WTC11 (cell line): ENCODE measurements at regions of chr15 and their contacts with region 1.

Region 1: GRCh38 chr15:88331280-88331679 is 74.7 kb upstream of the NTRK3 start:
- DNase-seq: peak; percentile 91
- ATAC-seq: peak; percentile 97
- H3K4me3 Mint-ChIP-seq: no peak overlapping the region
- H3K27ac Mint-ChIP-seq: no peak overlapping the region
- H3K4me1 Mint-ChIP-seq: no peaks in the 10 kb centered on the region
- H3K27me3 Mint-ChIP-seq: no peaks in the 10 kb centered on the region; the same call in 1 of the 2 replicates
- CTCF ChIP-seq: peak; percentile 77

Region 2: DNA sequence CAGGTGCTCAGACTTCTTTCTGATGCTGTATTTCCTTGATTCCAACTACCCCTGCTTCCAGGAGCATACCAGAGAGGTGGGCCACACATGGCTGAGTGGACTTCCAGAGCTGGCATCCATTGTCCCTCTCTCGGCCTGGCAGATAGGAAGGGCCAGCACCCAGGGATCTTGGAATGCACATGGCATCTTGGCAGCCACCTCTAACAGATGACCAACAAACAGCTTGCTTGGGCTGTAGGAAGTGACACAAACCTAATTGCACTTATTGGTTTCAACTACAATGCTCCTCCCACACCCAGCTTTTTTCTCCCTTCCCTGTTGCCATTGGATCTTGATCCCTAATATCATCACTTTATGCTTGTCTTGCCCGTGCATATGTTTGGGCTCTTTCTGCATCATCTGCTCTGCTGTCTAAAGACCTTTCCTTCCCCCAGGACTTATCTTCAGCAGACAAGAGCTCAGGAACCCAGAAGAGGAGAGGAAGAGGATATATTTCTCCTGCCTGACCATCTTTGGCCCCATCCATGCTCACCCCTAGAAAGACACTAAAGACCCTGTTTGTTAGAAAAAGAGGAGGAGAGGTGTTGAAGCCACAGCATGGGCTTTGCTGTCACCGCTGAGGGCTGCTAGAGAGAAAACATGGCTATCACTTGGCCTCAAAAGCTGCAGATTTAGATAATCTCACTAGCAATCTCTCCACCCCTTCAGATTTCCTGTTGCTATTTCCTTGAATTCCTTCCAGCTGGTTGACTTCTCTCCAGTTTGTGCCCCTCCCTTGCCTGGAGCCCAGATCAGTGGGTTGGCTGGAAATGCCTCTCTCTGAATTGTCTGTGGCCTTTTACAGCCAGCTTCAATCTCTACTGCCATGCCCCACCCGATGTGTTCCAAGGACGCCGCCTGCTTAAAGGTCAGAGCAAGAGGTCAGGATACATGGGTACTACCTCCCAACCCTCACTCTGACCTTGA is 369.1 kb before region 1 on chr15:
- CTCF ChIA-PET with region 1: no interaction called
- POLR2A ChIA-PET with region 1: no interaction called
- DNase-seq: no peak
- ATAC-seq: no peak; the same call in 1 of the 2 replicates
- H3K4me3 Mint-ChIP-seq: no peak overlapping the region
- H3K27ac Mint-ChIP-seq: no peak overlapping the region
- H3K4me1 Mint-ChIP-seq: peaks cover 14% of the 10 kb centered on the region
- H3K27me3 Mint-ChIP-seq: no peaks in the 10 kb centered on the region
- CTCF ChIP-seq: no peak

Region 3: DNA sequence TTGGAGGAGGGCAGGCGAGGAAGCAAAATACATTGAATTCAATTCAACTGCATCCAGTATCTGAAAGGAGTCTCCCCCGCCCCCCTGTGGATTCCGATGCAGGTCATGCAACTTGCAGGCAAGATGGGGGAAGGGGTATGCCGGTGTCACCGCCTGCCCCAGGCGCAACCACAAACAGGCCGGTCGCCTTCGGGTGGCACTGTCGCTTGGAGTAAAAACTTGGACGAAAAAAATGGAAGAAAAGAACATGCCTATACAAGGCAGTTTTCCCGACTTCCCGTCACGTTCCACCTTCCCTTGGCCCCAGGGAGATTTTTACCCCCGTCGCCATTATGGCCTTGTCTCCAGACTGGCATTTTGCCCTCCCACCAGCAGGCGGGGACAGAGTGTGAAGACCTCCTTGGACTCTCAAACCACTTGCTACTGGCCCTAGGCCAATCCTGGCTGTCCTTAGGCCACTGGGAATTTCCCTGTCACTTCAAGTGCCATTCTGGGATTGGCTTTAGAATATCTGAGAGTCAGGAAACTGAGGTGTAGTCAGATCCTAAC is 73.1 kb before region 1 on chr15:
- CTCF ChIA-PET with region 1: interaction called, 25 read pairs
- POLR2A ChIA-PET with region 1: no interaction called
- DNase-seq: peak; percentile 79
- ATAC-seq: peak; percentile 62
- H3K4me3 Mint-ChIP-seq: peak overlapping the region; percentile 98
- H3K27ac Mint-ChIP-seq: no peak overlapping the region; the same call in 1 of the 2 replicates
- H3K4me1 Mint-ChIP-seq: peaks cover 10% of the 10 kb centered on the region
- H3K27me3 Mint-ChIP-seq: peaks cover 59% of the 10 kb centered on the region
- CTCF ChIP-seq: peak; percentile 58; the same call in 1 of the 2 replicates

Region 4: GRCh38 chr15:88299497-88299896 is 31.8 kb before region 1 on chr15:
- CTCF ChIA-PET with region 1: interaction called, 13 read pairs
- POLR2A ChIA-PET with region 1: no interaction called
- DNase-seq: peak; percentile 22
- ATAC-seq: peak; percentile 52
- H3K4me3 Mint-ChIP-seq: no peak overlapping the region
- H3K27ac Mint-ChIP-seq: no peak overlapping the region
- H3K4me1 Mint-ChIP-seq: peaks cover 17% of the 10 kb centered on the region
- H3K27me3 Mint-ChIP-seq: peaks cover 3% of the 10 kb centered on the region; the same call in 1 of the 2 replicates
- CTCF ChIP-seq: no peak

Region 5: DNA sequence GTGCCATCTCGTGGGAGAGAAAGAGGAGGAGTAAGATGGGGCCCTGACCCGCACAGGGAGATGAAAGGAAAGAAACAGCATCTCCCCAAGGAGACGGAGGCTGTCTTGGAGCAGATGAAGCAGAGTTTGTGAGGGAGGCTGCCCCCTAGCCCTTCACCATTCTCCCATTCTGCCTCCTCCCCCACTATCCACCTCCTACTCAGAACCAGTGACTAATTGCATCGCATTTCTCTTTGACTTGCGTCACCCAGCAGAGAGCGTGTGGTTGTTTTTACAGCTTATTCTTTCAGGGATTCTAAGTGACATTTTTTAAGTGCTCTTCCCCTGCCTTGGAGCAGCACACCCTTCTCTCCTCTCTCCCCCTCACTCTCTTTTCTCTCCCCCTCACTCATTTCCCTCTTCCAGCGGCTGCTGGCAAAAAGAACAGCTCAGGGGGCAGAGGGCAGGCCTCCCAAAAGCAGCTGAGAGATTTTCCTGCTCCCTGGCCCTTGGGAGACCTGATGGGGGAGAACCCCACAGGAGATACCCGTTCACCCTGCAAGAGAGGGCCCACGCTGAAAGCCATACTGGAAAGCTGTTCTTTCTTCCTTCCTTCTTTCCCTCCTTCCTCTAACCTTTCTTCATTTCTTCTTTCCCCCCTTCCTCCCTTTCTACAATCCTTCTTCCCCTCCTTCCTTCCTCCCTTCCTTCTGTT is 44.1 kb after region 1 on chr15:
- CTCF ChIA-PET with region 1: interaction called, 14 read pairs
- POLR2A ChIA-PET with region 1: no interaction called
- DNase-seq: no peak
- ATAC-seq: peak; percentile 84
- H3K4me3 Mint-ChIP-seq: no peak overlapping the region
- H3K27ac Mint-ChIP-seq: no peak overlapping the region
- H3K4me1 Mint-ChIP-seq: peaks cover 10% of the 10 kb centered on the region
- H3K27me3 Mint-ChIP-seq: peaks cover 15% of the 10 kb centered on the region
- CTCF ChIP-seq: no peak